A673 (cell line): ENCODE measurements at regions of chr3 and their contacts with region 1.

Region 1: DNA sequence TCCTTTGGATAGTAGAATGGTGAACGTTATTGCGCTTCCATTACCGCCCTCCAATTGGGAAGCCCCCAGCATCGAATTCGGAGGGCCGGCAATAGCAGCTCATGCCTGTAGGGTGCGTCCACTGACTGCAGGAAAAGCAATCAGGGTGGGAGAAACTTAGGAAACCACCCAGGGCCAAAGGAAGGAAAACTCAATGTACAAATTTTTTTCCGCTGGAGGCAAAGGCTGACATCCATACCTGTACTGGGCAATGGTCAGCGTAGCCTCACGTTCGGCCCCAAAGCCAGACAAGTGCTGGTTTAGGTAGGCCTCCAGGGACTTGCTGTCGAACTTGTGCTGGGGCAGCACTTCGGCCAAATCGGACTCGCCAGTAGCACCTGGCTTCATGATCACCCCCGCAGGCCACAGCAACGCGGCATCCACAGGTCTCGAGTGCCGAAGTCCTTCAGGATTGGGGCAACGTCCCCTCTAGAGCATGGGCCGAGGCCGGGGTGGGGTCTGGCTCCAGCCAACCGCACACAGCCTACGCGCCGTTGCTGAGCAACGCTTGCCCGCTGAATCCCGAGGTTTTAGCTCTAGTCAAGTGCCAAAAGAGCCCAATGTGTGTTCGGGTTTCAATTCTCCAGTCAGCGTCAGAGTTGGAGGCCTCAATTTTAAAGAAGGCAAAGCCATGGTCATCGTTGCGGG is at the start of gene ACAD11:
- DNase-seq: peak; percentile 87
- H3K4me3 ChIP-seq: peak within 1 kb of the TSS; percentile 87
- H3K27ac ChIP-seq: peak within 1 kb of the TSS; percentile 93
- H3K4me1 ChIP-seq: peaks cover 10% of the 10 kb centered on the region
- H3K27me3 ChIP-seq: no peaks in the 10 kb centered on the region
- CTCF ChIP-seq: peak; percentile 86
- total RNA-seq, gene ACAD11: 10.4 and 15.3 TPM in 2 replicates

Region 2: DNA sequence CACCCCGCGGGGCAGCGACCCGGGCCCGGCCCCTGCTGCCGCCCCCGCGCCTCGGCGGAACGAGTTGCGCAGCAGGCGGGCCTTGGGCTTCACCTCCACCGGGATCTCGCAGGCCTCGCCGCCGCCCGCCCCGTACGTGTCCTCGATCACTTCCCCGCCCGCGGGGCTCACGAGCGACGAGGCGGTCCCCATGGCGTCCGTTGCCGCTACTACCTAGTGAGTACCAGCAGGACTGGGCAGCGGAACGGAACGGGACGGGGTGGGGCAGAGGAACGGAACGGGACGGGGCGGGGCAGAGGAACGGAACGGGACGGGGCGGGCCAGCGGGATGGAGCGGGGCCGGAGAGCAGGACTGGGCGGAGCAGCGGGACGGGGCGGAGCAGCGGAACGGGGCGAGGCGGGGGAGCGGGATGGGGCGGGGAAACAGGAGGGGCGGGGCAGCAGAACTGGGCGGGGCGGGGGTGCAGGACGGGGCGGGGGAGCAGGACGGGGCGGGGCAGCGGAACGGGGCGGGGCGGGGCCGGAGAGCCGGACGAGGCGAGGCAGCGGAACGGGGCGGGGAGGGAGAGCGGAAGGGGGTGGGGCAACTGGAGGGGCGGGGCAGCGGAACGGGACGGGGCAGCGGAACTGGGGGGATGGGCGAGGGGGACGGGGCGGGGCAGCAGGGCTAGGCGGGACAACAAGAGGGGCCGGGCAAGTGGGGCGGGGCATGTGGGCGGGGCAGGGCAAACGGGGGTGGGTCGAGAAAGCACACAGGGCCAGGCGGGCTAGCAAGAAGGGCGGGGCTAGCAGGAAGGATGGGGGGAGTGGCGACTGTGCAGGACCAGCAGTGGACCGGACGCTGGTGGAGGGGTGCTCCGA is 62.9 kb after region 1 on chr3 and contains the start of gene NPHP3:
- CTCF ChIA-PET with region 1: interaction called, 3 read pairs
- POLR2A ChIA-PET with region 1: no interaction called
- intact Hi-C with region 1: loop called (anchors 5 kb)
- DNase-seq: peak; percentile 94
- H3K4me3 ChIP-seq: peak within 1 kb of the TSS; percentile 97
- H3K27ac ChIP-seq: peak within 1 kb of the TSS; percentile 73
- H3K4me1 ChIP-seq: no peaks in the 10 kb centered on the region
- H3K27me3 ChIP-seq: no peaks in the 10 kb centered on the region
- CTCF ChIP-seq: no peak
- total RNA-seq, gene NPHP3: 5.8 and 9.0 TPM in 2 replicates

Region 3: GRCh38 chr3:132984181-132984580 is 324.7 kb after region 1 on chr3:
- CTCF ChIA-PET with region 1: no interaction called
- POLR2A ChIA-PET with region 1: no interaction called
- intact Hi-C with region 1: no loop called
- DNase-seq: no peak
- H3K4me3 ChIP-seq: no peak overlapping the region
- H3K27ac ChIP-seq: no peak overlapping the region
- H3K4me1 ChIP-seq: no peaks in the 10 kb centered on the region
- H3K27me3 ChIP-seq: peaks cover 16% of the 10 kb centered on the region
- CTCF ChIP-seq: no peak